ENCODE measurements at regions of chr14 and their contacts with region 1.

Region 1: DNA sequence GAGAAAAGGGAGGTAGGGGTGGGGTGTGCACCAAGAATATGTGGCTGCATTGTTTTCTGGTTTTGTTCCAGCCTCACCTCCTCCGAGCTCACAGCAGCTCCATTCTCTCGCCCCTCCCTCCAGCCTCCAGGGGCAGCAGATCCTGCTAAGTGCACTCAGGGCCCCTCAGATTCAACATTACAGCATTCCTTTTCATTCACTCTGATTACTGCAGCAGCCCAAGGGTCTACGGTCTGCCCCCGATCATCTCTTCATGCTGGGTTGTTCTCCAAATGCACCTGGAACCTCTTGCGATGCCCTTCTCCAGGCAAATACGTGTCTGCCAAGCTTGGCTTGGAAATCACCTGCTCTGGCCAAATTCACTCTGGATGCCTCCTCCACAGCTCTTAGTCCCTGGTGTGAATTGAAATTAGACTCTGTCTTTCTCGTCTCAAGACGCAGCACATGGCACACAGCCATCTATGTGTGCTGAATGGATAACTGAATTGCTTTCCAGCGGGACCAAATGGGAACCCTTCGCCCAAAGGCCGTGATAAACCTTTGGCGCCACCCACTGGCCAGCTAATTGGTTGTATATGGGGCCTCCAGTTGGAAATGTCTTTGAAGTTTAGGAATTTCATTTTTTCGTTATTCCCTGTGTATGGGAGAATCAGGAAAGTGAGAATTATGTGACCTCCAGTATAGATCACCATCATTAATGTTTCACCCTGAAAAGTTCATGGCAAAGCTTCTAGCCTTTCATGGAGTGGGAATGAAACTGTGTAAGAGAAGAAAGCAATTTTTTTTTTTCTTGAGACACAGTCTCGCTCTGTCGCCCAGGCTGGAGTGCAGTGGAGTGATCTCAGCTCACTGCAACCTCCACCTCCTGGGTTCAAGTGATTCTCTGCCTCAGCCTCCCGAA is 9.6 kb upstream of the HSP90AA1 start:
- DNase-seq: peak; percentile 83
- H3K4me3 Mint-ChIP-seq: no peak overlapping the region
- H3K27ac Mint-ChIP-seq: no peak overlapping the region
- H3K4me1 Mint-ChIP-seq: peaks cover 15% of the 10 kb centered on the region
- H3K27me3 Mint-ChIP-seq: no peaks in the 10 kb centered on the region

Region 2: DNA sequence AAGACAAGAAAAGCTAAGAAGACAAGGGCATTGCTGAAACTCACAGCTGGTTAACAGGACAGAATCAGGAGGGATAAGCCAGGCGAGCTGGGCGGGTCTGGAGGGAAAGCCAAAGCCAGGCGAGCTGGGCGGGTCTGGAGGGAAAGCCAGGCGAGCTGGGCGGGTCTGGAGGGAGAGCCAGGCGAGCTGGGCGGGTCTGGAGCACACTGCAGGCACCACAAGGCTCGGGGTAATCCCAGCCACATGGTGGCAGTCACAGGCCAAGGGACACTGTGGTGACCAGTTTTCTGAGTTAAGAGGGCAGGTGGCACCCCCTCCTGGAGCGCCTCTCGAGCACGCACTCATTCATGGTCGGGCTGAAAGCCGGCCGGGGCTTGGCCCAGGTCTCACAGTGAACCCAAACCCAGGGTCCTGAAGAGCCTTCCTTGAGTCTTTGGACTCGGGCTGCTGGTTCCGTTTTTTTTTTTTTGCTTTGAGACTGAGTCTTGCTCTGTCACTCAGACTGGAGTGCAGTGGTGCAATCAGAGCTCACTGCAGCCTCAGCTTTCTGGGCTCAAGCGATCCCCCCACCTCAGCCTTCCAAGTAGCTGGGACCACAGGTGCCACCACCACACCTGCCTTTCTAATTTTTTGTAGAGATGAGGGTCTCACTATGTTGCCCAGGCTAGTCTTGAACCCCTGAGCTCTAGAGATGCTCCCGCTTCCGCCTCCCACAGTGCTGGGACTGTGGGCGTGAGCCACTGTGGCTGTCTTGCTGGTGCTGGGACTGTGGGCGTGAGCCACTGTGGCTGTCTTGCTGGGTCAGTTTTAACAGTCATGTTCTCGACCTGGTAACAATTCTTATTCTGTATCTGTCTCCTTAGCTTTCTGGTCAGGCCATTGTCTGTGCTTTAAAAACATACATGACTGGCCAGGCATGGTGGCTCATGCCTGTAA is 49.9 kb before region 1 on chr14:
- CTCF ChIA-PET with region 1: interaction called, 4 read pairs
- intact Hi-C with region 1: loop called (anchors 5 kb)
- DNase-seq: peak; percentile 48
- H3K4me3 Mint-ChIP-seq: no peak overlapping the region
- H3K27ac Mint-ChIP-seq: no peak overlapping the region
- H3K4me1 Mint-ChIP-seq: no peaks in the 10 kb centered on the region
- H3K27me3 Mint-ChIP-seq: no peaks in the 10 kb centered on the region

Region 3: DNA sequence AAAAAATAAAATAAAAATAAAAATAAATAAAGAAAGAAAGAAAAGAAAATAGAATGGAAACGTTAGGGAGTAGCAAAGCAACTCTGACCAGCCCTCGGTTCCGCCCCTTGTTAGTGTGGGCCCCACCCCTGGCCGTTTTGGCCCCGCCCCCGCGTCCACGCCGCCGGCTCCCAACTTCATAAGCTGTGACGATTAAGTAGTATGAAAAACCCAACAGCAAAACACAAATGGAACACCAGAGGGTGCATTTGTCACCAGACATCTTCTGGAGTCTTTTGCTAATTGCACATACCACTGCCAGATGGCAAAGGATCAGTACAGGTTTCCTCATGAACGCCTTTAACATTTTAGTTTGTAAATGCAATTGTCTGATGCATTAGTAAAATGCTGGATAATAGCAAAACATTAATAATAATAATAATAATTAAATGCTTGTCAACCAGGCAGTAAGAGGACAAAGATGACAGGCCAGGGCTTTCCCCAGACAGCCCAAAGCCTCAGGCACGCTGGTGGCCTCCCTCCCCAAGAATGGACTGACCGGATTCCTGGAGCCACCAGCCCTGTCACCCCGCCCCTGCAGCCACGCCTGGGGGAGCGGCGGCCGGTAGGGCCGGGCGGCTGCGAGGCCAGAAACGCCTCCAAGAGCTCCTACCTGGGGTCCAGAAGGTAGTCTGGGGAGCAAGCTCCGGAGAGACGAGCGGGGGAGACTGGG is 33.2 kb before region 1 on chr14:
- CTCF ChIA-PET with region 1: interaction called, 19 read pairs
- intact Hi-C with region 1: loop called (anchors 1 kb)
- DNase-seq: peak; percentile 71
- H3K4me3 Mint-ChIP-seq: no peak overlapping the region
- H3K27ac Mint-ChIP-seq: no peak overlapping the region
- H3K4me1 Mint-ChIP-seq: no peaks in the 10 kb centered on the region
- H3K27me3 Mint-ChIP-seq: no peaks in the 10 kb centered on the region

Region 4: DNA sequence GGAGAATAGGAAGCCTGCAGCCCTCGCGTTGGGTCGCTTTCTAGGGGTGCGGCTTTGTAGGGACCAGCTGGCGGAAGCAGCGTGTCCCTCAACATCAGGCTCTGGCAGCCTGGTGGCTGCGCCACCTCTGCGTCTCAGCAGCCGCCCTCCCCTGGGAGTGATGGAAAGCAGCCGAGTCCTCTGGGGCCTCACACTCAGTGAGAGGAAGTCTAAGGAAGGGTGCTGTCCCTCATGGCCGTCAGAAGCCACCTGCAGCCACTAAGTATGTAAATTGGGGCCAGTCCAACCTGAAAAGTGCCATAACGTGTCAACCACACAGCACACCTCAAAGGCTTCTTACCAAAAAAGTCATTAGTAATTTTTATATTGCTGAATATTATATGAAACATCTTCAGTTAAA is 123.6 kb after region 1 on chr14:
- CTCF ChIA-PET with region 1: no interaction called
- intact Hi-C with region 1: no loop called
- DNase-seq: peak; percentile 69
- H3K4me3 Mint-ChIP-seq: no peak overlapping the region
- H3K27ac Mint-ChIP-seq: no peak overlapping the region
- H3K4me1 Mint-ChIP-seq: peaks cover 13% of the 10 kb centered on the region
- H3K27me3 Mint-ChIP-seq: no peaks in the 10 kb centered on the region